HepG2 (cell line): ENCODE measurements at regions of chr19 and their contacts with region 1.

Region 1: GRCh38 chr19:1026189-1027019 is at the start of gene CNN2:
- DNase-seq: peak; percentile 64
- ATAC-seq: peak; percentile 89
- H3K4me3 ChIP-seq: peak within 1 kb of the TSS; percentile 66 to 93 (median 82)
- H3K27ac ChIP-seq: peak within 1 kb of the TSS; percentile 78
- H3K4me1 ChIP-seq: peaks cover 24% of the 10 kb centered on the region
- H3K27me3 ChIP-seq: no peaks in the 10 kb centered on the region; a peak in 1 of 5 replicates
- CTCF ChIP-seq: no peak
- EP300 ChIP-seq: no peak
- POLR2A ChIP-seq: peak; percentile 50 to 55; a peak in 3 of 4 replicates
- RAD21 ChIP-seq: peak; percentile 49; the same call in 1 of the 2 replicates
- total RNA-seq, gene CNN2: 70.0 and 84.5 TPM in 2 replicates

Region 2: GRCh38 chr19:958967-959820 is 67.2 kb before region 1 on chr19:
- CTCF ChIA-PET with region 1: no interaction called
- POLR2A ChIA-PET with region 1: no interaction called
- in situ Hi-C with region 1: no loop called
- intact Hi-C with region 1: no loop called
- DNase-seq: peak; percentile 59
- ATAC-seq: peak; percentile 3; the same call in 1 of the 3 replicates
- H3K4me3 ChIP-seq: peak overlapping the region in 1 of 3 experiments; percentile 30; a peak in 1 of 6 replicates
- H3K27ac ChIP-seq: peak overlapping the region; percentile 74
- H3K4me1 ChIP-seq: peaks cover 86% of the 10 kb centered on the region
- H3K27me3 ChIP-seq: no peaks in the 10 kb centered on the region
- CTCF ChIP-seq: no peak
- EP300 ChIP-seq: no peak
- POLR2A ChIP-seq: peak in 1 of 2 experiments; percentile 48; a peak in 1 of 4 replicates
- RAD21 ChIP-seq: no peak

Region 3: DNA sequence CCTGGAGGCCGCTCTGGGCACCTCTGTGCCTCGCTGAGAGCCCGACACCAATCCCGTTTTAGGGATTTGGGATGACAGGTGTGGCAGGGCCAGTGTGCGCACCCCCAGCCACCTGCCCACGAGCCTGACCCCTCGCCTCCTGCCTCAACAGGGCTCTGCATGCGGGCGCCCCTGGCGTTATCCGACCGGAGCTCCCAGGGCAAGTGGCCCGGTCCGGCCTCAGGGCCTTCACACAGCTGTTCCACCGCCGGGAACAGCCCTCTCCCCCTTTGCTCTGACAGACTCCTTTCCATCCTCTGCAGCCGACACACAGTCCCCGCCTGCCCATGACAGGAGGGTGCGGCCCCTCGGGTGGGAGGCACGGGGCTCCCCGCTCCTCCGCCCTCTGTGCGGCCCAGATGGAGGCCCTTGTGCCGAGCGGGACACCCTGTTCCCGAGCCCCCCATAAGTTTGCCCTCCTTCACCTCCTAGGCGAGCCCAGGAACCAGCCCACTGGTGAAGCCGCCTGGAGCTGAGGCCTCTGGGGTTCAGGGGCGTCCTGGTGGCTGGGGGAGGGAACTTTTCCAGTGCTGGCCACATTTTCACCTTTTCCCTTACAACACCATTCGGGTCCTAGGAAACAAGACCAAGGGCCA is 49.2 kb before region 1 on chr19:
- CTCF ChIA-PET with region 1: no interaction called
- POLR2A ChIA-PET with region 1: no interaction called
- in situ Hi-C with region 1: no loop called
- intact Hi-C with region 1: no loop called
- DNase-seq: no peak
- ATAC-seq: peak; percentile 25
- H3K4me3 ChIP-seq: no peak overlapping the region
- H3K27ac ChIP-seq: no peak overlapping the region
- H3K4me1 ChIP-seq: peaks cover 24% of the 10 kb centered on the region
- H3K27me3 ChIP-seq: no peaks in the 10 kb centered on the region
- CTCF ChIP-seq: no peak
- EP300 ChIP-seq: no peak
- POLR2A ChIP-seq: no peak
- RAD21 ChIP-seq: no peak

Region 4: DNA sequence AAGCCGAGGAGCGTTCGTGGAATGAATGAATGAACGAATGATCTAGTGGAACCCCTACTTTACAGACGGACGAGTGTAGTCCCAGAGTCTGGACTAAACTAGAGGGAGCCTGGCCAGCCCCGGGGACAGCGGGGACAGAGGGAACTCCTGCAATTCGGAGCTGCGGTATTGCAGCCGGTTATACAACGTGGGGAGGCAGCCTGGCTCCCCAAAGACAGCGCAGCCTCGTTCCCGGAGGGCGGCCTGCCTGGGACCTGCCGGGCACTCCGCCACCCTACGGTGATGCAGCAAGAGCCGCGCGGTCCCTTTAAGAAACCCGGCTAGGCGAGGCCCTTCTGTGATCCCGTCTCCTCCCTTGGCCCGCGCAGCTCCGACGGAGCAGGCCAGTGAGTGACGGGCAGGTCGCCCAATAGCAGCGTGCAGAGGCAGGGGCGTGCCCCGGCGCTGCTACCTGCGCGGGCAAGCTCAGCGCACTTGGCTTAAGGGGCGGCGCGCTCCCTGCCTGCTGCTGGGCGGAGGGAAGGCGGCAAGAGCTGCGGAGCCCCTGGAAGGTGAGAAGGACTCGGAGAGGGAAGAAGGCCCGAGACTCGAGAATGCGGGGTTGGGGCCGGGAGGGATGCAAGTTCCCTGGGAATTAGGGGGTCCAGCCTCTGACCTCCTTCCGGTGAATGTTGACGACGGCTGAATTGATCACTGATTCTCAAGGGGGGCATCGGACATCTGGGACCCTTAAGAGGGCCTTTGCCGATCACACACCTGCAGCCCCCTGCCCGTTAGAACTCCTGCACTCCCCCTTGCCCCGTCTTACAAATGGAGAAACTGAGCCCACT is 13.5 kb after region 1 on chr19 and contains the start of gene ABCA7:
- CTCF ChIA-PET with region 1: no interaction called
- POLR2A ChIA-PET with region 1: interaction called, 71 read pairs
- in situ Hi-C with region 1: no loop called
- intact Hi-C with region 1: no loop called
- DNase-seq: peak; percentile 90
- ATAC-seq: peak; percentile 91
- H3K4me3 ChIP-seq: peak within 1 kb of the TSS; percentile 62 to 79 (median 73)
- H3K27ac ChIP-seq: peak within 1 kb of the TSS; percentile 23
- H3K4me1 ChIP-seq: peaks cover 25% of the 10 kb centered on the region
- H3K27me3 ChIP-seq: no peaks in the 10 kb centered on the region
- CTCF ChIP-seq: no peak; the same call in 1 of the 2 replicates
- EP300 ChIP-seq: no peak
- POLR2A ChIP-seq: peak; percentile 35 to 38; a peak in 3 of 4 replicates
- RAD21 ChIP-seq: peak; percentile 34
- total RNA-seq, gene ABCA7: 1.3 and 4.4 TPM in 2 replicates

Region 5: GRCh38 chr19:1045247-1045603 is 18.8 kb after region 1 on chr19:
- CTCF ChIA-PET with region 1: no interaction called
- POLR2A ChIA-PET with region 1: interaction called, 71 read pairs
- in situ Hi-C with region 1: no loop called
- intact Hi-C with region 1: no loop called
- DNase-seq: peak; percentile 89
- ATAC-seq: peak; percentile 61
- H3K4me3 ChIP-seq: no peak overlapping the region
- H3K27ac ChIP-seq: no peak overlapping the region
- H3K4me1 ChIP-seq: peaks cover 39% of the 10 kb centered on the region
- H3K27me3 ChIP-seq: no peaks in the 10 kb centered on the region
- CTCF ChIP-seq: no peak
- EP300 ChIP-seq: no peak
- POLR2A ChIP-seq: no peak
- RAD21 ChIP-seq: no peak